Activated T-helper 2 cell treated with anti-CD3 and anti-CD28 coated beads, Interferon-gamma antibody, Interleukin-2, Interleukin-4, amounts not matched to agents 10 μg/mL and 5 μg/mL and 100 μg/mL, durations not matched to agents 14 hours and 24 hours and 36 hours (primary cell): ENCODE measurements at regions of chr6 and their contacts with region 1.

Region 1: GRCh38 chr6:12011276-12012076 is 636 bp upstream of the HIVEP1 start:
- DNase-seq: peak; percentile 93
- H3K4me3 Mint-ChIP-seq: peak overlapping the region; percentile 96
- H3K27ac Mint-ChIP-seq: peak overlapping the region; percentile 93
- H3K4me1 Mint-ChIP-seq: peaks cover 46% of the 10 kb centered on the region
- H3K27me3 Mint-ChIP-seq: no peaks in the 10 kb centered on the region

Region 2: GRCh38 chr6:11653028-11653583 is 358.4 kb before region 1 on chr6:
- intact Hi-C with region 1: loop called (anchors 10 kb)
- DNase-seq: peak; percentile 31
- H3K4me3 Mint-ChIP-seq: no peak overlapping the region
- H3K27ac Mint-ChIP-seq: no peak overlapping the region
- H3K4me1 Mint-ChIP-seq: peaks cover 11% of the 10 kb centered on the region
- H3K27me3 Mint-ChIP-seq: peaks cover 16% of the 10 kb centered on the region

Region 3: GRCh38 chr6:11727998-11728961 is 283.2 kb before region 1 on chr6:
- intact Hi-C with region 1: loop called (anchors 1 kb)
- DNase-seq: no peak
- H3K4me3 Mint-ChIP-seq: peak overlapping the region; percentile 53
- H3K27ac Mint-ChIP-seq: peak overlapping the region; percentile 72
- H3K4me1 Mint-ChIP-seq: peaks cover 69% of the 10 kb centered on the region
- H3K27me3 Mint-ChIP-seq: peaks cover 4% of the 10 kb centered on the region

Region 4: DNA sequence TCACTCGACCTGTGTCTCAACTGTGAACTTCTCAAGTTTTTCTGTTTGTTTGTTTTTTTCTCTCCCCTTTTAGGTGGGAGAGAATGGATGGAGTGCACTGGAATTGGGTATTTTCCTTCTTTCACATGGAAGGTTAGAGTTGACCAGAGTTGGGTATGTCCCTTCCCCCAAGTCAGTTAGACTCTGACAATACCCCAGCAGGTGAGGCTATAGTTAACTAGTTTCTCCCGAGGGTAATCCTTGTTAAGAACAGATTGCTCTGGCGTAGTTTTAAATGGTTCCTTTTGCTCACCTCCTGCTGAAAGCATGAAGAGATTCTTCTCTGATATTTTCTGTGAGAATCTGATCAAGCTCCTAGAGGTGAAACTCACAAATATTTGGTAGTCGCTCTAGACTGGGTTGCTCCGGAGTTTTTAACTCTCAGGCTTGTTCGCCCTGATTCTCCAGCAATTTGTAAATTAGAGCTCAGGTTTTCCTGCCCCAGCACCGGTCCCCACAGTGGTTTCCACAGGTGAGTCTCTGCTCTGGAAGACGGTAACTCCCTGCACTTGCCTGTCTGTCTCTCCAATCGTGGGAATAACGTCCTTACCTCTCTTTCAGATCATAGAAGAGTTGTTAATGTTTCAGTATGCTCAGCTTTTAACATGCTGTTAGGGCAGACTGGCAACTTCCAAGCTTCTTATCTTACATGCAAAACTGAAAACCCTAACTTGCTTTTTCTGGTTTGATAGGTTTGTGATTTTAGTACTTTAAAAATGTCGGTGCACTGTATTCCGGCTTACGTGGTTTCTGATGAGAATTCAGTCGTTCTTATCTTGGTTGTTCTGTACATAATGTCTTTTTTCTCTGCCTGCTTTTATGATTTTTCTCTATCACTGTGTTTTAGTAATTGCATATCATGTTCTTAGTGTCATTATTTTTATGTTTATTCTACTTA is 110.5 kb before region 1 on chr6:
- intact Hi-C with region 1: loop called (anchors 1 kb)
- DNase-seq: no peak
- H3K4me3 Mint-ChIP-seq: peak overlapping the region; percentile 20
- H3K27ac Mint-ChIP-seq: peak overlapping the region; percentile 3
- H3K4me1 Mint-ChIP-seq: peaks cover 28% of the 10 kb centered on the region
- H3K27me3 Mint-ChIP-seq: peaks cover 43% of the 10 kb centered on the region

Region 5: GRCh38 chr6:12000174-12000573 is 11.3 kb before region 1 on chr6:
- intact Hi-C with region 1: loop called (anchors 1 kb)
- DNase-seq: no peak
- H3K4me3 Mint-ChIP-seq: no peak overlapping the region
- H3K27ac Mint-ChIP-seq: no peak overlapping the region
- H3K4me1 Mint-ChIP-seq: peaks cover 25% of the 10 kb centered on the region
- H3K27me3 Mint-ChIP-seq: no peaks in the 10 kb centered on the region

Region 6: GRCh38 chr6:12119085-12119588 is 107.7 kb after region 1 on chr6:
- intact Hi-C with region 1: loop called (anchors 2 kb)
- DNase-seq: peak; percentile 61
- H3K4me3 Mint-ChIP-seq: peak overlapping the region; percentile 11
- H3K27ac Mint-ChIP-seq: peak overlapping the region; percentile 75
- H3K4me1 Mint-ChIP-seq: peaks cover 47% of the 10 kb centered on the region
- H3K27me3 Mint-ChIP-seq: no peaks in the 10 kb centered on the region